A549 (cell line): ENCODE measurements at regions of chr16 and their contacts with region 1.

Region 1: DNA sequence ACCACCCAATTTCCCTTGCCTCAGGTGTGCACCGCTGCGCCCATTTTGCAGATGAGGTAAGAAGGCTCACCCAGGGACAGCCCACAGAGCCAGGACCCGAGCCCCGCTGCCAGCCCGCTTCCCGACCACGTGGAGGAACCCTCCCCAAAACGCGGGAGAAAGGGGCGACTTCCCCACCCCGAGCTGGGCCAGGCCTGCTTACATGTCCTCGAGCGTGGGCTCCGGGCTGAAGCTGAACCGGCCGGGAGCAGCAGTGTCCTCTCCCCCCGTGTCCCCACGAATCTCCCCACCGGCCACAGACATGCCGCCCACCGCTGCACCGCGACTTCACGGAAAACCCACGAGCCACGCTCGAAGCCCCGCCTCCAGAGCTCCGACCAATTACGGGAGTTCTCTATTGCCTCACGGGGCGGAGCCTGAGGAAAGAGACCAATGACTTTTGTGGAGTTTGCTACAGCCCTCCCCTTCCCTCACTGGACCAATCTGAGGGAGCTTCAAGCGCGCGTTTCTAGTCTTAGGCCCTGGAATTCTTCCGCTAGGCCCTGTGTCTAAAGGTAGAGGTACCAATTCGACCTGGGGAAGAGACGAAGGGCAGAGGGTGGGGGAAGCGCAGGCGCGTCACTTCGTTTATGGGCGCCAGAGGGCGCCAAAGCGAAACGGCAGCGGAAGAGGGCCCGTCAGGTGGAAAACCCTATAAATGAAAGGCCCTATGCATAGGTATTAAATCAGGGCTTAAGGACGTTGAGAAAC is at the start of gene DCTPP1:
- DNase-seq: peak; percentile 98 to 100
- ATAC-seq: peak; percentile 99
- H3K4me3 ChIP-seq: peak within 1 kb of the TSS; percentile 70
- H3K27ac ChIP-seq: peak within 1 kb of the TSS; percentile 77 to 89
- H3K4me1 ChIP-seq: peaks cover 12% of the 10 kb centered on the region
- CTCF ChIP-seq: peak; percentile 95
- EP300 ChIP-seq: no peak
- POLR2A ChIP-seq: peak; percentile 48; the same call in 1 of the 2 replicates
- RAD21 ChIP-seq: peak; percentile 73 to 91
- polyA plus RNA-seq, gene DCTPP1: 105 and 122 TPM in 2 replicates

Region 2: DNA sequence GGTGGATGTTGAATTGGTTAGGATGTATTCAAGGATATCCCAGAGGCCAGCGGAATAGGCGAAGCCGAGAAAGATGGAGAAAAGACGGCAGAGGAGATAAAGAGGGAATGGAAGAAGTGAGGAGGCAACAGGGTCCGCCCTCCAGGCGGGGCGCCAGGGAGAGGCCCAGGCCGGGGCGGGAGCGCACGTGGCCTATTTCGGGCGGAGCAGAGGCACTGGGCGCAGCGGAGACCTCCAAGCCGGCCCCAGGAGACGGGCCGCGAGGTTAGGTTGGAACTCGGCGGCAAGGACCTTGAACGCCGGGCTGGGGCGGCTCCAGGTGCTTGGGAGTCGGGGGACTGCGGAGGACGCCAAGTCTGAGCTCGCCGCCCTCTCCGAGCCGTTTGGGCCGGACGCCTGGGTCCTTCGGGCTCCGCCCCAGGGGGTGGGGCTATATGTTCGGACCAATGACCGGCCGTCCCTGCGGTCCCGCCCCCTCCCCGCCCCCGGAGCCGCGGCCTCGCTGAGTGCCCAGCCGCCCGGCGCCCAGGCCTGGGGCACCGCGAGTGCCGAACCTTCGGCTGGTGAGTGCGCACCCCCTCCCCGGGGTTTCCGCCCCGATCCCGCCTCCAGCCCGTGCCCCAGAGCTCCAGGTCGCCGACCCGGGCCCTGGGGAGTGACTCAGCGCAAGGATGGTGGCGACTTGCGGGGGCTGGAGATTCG is 22.6 kb before region 1 on chr16 and contains the start of gene ZNF771:
- CTCF ChIA-PET with region 1: interaction called, 14 read pairs
- POLR2A ChIA-PET with region 1: interaction called, 8 read pairs
- DNase-seq: peak; percentile 83 to 90
- ATAC-seq: peak; percentile 88 to 92
- H3K4me3 ChIP-seq: peak within 1 kb of the TSS; percentile 62
- H3K27ac ChIP-seq: peak within 1 kb of the TSS; percentile 80 to 92
- H3K4me1 ChIP-seq: peaks cover 20% of the 10 kb centered on the region
- CTCF ChIP-seq: no peak
- EP300 ChIP-seq: no peak
- POLR2A ChIP-seq: peak; percentile 69
- RAD21 ChIP-seq: no peak
- polyA plus RNA-seq, gene ZNF771: 5.0 and 5.7 TPM in 2 replicates

Region 3: GRCh38 chr16:30458561-30459394 is 28.9 kb after region 1 on chr16:
- CTCF ChIA-PET with region 1: interaction called, 12 read pairs
- POLR2A ChIA-PET with region 1: no interaction called
- DNase-seq: no peak
- ATAC-seq: no peak
- H3K4me3 ChIP-seq: no peak overlapping the region
- H3K27ac ChIP-seq: no peak overlapping the region
- H3K4me1 ChIP-seq: no peaks in the 10 kb centered on the region
- CTCF ChIP-seq: no peak
- EP300 ChIP-seq: no peak
- POLR2A ChIP-seq: no peak
- RAD21 ChIP-seq: no peak

Region 4: DNA sequence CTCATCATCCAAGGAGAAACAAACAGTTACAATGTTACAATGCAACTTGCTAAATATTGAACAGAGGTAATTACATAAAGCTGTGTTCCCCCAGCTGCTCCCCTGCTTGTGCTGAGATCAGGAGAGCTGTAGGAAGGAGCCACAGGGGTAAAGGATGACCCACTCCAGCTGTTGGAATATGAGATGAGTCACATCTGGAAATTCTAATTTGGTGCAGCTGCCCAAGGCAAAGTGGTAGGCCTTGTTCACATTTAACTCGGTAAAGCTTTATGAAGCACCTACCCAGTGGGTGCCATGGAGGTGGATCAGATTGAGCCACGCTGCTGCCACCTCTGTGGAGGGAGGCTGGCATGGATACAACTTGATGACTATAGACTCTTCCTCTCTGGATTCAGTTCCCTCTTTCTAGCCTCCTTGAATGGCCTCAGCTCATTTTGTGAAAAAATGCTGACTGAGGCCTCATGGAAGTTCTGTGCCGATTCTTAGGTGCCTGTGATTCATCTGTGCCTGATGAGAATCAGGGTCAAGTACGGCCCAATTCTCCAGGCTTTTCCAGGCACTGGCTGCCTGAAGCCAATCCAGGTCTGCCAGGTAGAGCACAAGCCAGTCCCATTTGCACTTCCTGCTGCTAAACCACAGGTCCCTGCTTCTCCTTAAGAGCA is 172.9 kb after region 1 on chr16:
- CTCF ChIA-PET with region 1: interaction called, 16 read pairs
- POLR2A ChIA-PET with region 1: interaction called, 3 read pairs
- DNase-seq: no peak
- ATAC-seq: no peak; a peak in 1 of 6 replicates
- H3K4me3 ChIP-seq: no peak overlapping the region
- H3K27ac ChIP-seq: no peak overlapping the region
- H3K4me1 ChIP-seq: no peaks in the 10 kb centered on the region
- CTCF ChIP-seq: no peak
- EP300 ChIP-seq: no peak
- POLR2A ChIP-seq: no peak
- RAD21 ChIP-seq: no peak

Region 5: DNA sequence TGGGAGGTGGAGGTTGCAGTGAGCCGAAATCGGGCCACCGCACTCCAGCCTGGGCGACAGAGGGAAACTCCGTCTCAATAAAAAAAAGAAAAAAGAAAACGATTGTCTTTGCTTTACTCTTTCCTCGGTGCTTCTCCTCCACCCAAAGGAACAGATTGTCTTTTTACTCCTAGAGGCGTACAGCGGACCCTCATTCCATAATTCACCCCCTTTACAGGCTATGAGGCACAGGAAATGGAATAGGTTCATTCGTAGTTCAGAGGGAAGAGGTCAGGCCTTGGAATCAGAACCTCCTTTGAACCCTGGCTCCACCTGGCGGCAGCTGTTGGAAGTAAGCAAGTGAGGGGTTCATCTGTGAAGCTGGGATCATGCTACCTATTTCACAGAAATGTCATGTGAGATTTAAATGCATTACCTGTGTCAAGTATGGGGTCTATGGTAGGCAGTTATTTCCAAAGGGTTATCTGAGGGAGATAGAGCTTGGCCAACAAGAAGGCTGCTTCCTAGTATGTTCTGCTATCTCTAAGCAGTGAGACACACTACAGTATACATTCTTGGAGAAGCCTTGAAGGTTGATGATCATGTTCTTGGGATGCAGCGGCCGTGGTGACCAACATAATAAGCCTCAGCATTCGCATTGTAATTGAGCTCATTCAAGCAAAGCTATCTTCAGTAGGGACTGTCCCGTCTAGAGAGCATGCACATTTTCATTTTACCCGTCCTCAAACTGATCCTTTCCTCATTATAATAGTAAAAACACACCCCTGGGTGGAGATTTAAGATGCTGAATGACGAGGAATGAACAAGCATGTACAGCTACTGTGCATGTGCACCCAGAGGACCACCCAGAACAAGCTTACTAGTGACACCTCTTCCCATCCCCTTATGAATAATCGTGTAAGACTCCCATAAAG is 199.0 kb after region 1 on chr16:
- CTCF ChIA-PET with region 1: interaction called, 18 read pairs
- POLR2A ChIA-PET with region 1: interaction called, 8 read pairs
- DNase-seq: peak; percentile 73 to 86
- ATAC-seq: peak; percentile 95 to 99
- H3K4me3 ChIP-seq: peak overlapping the region; percentile 34
- H3K27ac ChIP-seq: peak overlapping the region; percentile 58 to 78
- H3K4me1 ChIP-seq: no peaks in the 10 kb centered on the region
- CTCF ChIP-seq: peak; percentile 87
- EP300 ChIP-seq: no peak
- POLR2A ChIP-seq: no peak
- RAD21 ChIP-seq: peak; percentile 81